ENCODE measurements at regions of chr15 and their contacts with region 1.

Region 1: DNA sequence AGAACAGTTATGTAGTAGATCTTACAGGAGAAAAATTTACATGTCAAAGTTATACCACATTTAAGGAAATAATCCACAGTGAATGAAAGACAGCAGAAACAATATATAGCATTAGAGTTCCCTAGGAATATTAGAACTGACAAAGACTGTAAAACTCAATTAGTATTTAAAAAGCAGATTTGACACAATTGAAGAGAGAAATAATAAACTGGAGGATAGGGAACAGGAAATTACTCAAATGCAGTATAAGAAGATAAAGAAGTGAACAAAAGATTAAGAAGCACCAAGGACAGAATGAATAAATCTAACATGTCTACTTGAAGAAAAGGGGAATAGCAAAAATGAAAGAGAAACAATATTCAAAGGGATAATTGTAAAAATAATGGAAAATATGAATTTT is 132.6 kb upstream of the CHRNA7 start:
- DNase-seq: no peak
- H3K4me3 ChIP-seq: no peak overlapping the region
- H3K27ac ChIP-seq: no peak overlapping the region
- H3K4me1 ChIP-seq: no peaks in the 10 kb centered on the region
- H3K27me3 ChIP-seq: no peaks in the 10 kb centered on the region
- CTCF ChIP-seq: no peak
- POLR2A ChIP-seq: no peak

Region 2: DNA sequence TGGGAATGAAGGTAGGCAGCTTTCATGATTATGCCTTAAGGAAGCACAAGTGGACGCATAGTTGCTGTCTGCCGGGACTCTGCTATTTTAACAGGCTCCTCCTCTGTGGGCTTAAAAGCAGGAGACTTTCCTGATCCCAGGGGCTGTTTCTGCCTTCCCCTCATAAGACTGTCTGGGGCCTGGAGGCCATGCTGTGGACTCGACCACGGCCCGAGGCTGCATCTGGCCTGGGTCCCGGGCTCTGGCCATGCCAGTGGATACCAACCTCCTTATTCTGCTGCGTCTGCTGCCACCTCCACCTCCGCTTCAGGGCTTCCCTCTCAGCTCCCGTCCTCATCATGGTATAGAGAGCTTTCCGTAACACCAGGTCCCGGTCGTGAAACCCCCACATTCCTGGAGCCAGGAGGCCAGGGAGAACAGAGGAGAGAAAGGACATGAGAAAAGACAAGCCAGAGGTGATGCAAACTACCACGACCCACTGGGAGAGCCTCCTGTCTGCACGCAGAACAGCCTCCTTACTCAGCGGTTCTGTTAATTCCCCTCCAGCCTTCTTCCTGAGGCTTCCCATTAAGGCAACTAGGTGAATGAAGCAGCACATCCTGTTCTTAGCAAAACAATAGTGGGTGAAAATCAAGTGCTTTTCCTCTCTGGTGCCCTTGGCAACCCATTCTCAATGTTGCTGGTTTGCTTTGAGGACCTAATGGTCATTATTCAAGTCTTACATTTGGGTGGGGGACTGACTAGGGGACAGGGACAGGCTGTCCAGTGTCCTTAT is 370.6 kb before region 1 on chr15:
- intact Hi-C with region 1: no loop called
- DNase-seq: no peak
- H3K4me3 ChIP-seq: peak overlapping the region in 1 of 2 donors; percentile 0
- H3K27ac ChIP-seq: no peak overlapping the region
- H3K4me1 ChIP-seq: no peaks in the 10 kb centered on the region
- H3K27me3 ChIP-seq: no peaks in the 10 kb centered on the region
- CTCF ChIP-seq: no peak
- POLR2A ChIP-seq: no peak

Region 3: GRCh38 chr15:32942401-32942841 is 1044.7 kb after region 1 on chr15:
- intact Hi-C with region 1: loop called (anchors 5 kb)
- DNase-seq: no peak
- H3K4me3 ChIP-seq: no peak overlapping the region
- H3K27ac ChIP-seq: no peak overlapping the region
- H3K4me1 ChIP-seq: no peaks in the 10 kb centered on the region
- H3K27me3 ChIP-seq: no peaks in the 10 kb centered on the region
- CTCF ChIP-seq: no peak
- POLR2A ChIP-seq: no peak

Measured in vagina (tissue), 2 donors.